Endothelial cell of umbilical vein (primary cell): ENCODE measurements at regions of chr13 and their contacts with region 1.

Region 1: DNA sequence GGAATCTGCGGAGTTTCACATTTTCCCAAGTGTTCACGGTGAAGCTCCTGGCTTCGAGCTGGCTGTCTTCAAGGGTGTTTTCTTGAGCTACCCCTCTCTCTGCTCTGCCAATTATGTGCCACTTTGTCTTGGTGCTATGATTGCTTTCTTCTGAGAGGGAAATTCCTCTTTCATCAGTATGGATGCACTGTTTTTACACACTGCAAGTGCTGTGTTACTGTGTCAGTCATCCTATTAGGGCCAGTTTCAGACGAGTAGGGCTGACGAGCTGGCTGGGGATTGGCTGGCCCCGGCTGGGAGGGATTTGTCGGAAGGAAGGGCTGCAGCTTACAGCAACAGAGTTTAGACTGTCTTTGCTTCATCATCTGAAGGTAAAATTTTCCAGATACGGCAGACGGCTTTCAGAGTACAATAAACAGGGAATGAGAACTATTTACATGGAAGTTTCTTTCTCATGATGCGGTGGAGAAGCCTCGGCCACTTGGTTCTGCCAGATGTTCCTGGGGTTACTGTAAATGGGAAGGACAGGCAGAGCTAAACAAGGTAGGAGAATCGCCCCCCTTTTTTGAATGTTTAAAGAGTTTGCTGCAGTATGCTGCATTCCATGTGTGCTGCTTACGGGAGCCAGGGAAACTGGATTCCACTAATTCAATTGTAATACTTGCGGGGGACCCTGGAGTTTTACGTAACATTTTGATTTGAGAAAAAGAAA is at the start of gene MBNL2:
- DNase-seq: peak; percentile 98
- H3K4me3 ChIP-seq: peak within 1 kb of the TSS; percentile 54 to 100 (median 98)
- H3K27ac ChIP-seq: peak within 1 kb of the TSS; percentile 89
- H3K4me1 ChIP-seq: peaks cover 32% of the 10 kb centered on the region
- H3K27me3 ChIP-seq: no peaks in the 10 kb centered on the region
- CTCF ChIP-seq: no peak
- POLR2A ChIP-seq: peak; percentile 70
- total RNA-seq, gene MBNL2: 75.6 and 76.5 TPM in 2 replicates

Region 2: DNA sequence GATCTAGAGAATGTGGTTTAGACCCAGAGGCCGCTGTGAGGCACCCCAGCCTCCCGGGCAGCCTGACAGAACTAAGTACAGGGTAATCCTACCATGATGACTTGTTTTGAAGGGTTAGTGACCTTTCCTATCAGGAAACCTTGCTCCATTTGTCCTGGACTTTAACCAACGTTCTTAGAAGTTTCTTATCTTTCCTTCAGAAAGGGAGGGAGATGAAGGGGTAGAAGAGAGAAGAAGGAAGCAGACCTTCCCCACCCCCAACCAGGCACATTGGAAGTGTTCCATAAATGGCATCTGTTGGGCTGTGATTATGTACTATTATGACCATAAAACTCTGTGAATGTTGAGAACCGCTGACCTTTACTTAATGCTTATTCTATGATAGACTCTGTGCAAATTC is 412.0 kb before region 1 on chr13:
- CTCF ChIA-PET with region 1: no interaction called
- POLR2A ChIA-PET with region 1: no interaction called
- dilution Hi-C with region 1: no loop called
- intact Hi-C with region 1: no loop called
- DNase-seq: no peak
- H3K4me3 ChIP-seq: no peak overlapping the region
- H3K27ac ChIP-seq: no peak overlapping the region
- H3K4me1 ChIP-seq: no peaks in the 10 kb centered on the region
- H3K27me3 ChIP-seq: no peaks in the 10 kb centered on the region
- CTCF ChIP-seq: no peak
- POLR2A ChIP-seq: no peak

Region 3: GRCh38 chr13:97235549-97236231 is 13.5 kb after region 1 on chr13:
- CTCF ChIA-PET with region 1: interaction called, 44 read pairs
- POLR2A ChIA-PET with region 1: interaction called, 9 read pairs
- dilution Hi-C with region 1: no loop called
- intact Hi-C with region 1: loop called (anchors 1 kb)
- DNase-seq: peak; percentile 64
- H3K4me3 ChIP-seq: peak overlapping the region in 2 of 3 experiments; percentile 13 to 33
- H3K27ac ChIP-seq: peak overlapping the region; percentile 60
- H3K4me1 ChIP-seq: peaks cover 70% of the 10 kb centered on the region
- H3K27me3 ChIP-seq: no peaks in the 10 kb centered on the region
- CTCF ChIP-seq: no peak
- POLR2A ChIP-seq: no peak

Region 4: DNA sequence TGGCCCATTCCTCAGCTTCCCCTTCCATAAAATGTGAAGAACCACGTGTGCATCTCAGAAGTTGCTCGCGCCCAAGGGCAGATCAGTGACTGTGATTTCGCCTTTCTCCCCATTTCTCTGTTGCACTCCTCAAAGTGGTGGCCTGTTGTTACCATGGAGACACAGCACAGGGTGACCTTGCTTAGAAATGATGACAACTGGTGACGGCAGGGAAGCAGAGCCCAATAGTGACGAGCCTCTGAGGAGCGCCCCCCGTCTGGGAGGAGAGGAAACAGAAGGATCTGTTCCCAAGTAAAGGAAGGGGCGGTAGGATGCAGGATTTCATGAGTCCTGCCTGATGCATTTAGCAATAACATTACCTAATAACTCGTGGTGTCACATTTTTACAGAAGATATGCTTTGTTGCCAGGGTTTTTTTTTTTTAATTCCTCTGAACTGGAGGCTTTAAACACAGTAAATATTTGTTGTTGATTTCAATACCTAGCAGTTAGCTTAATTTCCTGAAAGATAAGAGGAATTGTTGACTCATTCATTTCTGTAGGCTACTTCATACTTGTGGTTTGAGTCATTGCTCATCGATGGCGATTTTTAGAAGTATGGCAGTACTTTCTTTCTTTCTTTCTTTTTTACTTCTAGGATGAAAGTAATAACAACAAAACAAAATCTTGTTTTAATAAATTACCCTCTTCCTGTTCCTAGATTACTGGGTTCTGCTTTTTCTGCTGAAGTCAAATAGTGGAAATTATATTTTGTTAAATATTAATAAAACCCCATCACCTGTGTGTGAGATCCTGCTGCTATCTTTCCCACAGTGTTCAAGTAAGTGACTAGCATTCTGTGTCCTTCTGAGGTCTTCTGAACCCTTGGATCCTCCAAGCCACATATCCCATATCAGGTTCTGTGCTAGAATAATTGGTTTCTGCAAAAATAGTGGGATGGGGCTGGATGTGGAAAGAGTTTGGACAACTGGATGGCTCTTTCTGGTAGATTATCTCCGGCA is 36.0 kb after region 1 on chr13:
- CTCF ChIA-PET with region 1: interaction called, 29 read pairs
- POLR2A ChIA-PET with region 1: interaction called, 6 read pairs
- dilution Hi-C with region 1: no loop called
- intact Hi-C with region 1: loop called (anchors 1 kb)
- DNase-seq: peak; percentile 98
- H3K4me3 ChIP-seq: no peak overlapping the region
- H3K27ac ChIP-seq: peak overlapping the region; percentile 98
- H3K4me1 ChIP-seq: peaks cover 76% of the 10 kb centered on the region
- H3K27me3 ChIP-seq: no peaks in the 10 kb centered on the region
- CTCF ChIP-seq: peak in 1 of 2 donors; percentile 21
- POLR2A ChIP-seq: peak; percentile 46

Region 5: GRCh38 chr13:97295283-97296182 is 73.4 kb after region 1 on chr13:
- CTCF ChIA-PET with region 1: interaction called, 8 read pairs
- POLR2A ChIA-PET with region 1: interaction called, 7 read pairs
- dilution Hi-C with region 1: no loop called
- intact Hi-C with region 1: loop called (anchors 1 kb)
- DNase-seq: peak; percentile 85
- H3K4me3 ChIP-seq: peak overlapping the region in 1 of 3 experiments; percentile 29
- H3K27ac ChIP-seq: peak overlapping the region; percentile 98
- H3K4me1 ChIP-seq: peaks cover 37% of the 10 kb centered on the region
- H3K27me3 ChIP-seq: no peaks in the 10 kb centered on the region
- CTCF ChIP-seq: no peak
- POLR2A ChIP-seq: peak; percentile 24

Region 6: GRCh38 chr13:97344265-97345175 is 122.4 kb after region 1 on chr13:
- CTCF ChIA-PET with region 1: interaction called, 56 read pairs
- POLR2A ChIA-PET with region 1: interaction called, 4 read pairs
- dilution Hi-C with region 1: no loop called
- intact Hi-C with region 1: loop called (anchors 1 kb)
- DNase-seq: peak; percentile 78
- H3K4me3 ChIP-seq: no peak overlapping the region
- H3K27ac ChIP-seq: peak overlapping the region; percentile 32
- H3K4me1 ChIP-seq: peaks cover 5% of the 10 kb centered on the region
- H3K27me3 ChIP-seq: no peaks in the 10 kb centered on the region
- CTCF ChIP-seq: peak; percentile 56 to 63
- POLR2A ChIP-seq: no peak

Region 7: DNA sequence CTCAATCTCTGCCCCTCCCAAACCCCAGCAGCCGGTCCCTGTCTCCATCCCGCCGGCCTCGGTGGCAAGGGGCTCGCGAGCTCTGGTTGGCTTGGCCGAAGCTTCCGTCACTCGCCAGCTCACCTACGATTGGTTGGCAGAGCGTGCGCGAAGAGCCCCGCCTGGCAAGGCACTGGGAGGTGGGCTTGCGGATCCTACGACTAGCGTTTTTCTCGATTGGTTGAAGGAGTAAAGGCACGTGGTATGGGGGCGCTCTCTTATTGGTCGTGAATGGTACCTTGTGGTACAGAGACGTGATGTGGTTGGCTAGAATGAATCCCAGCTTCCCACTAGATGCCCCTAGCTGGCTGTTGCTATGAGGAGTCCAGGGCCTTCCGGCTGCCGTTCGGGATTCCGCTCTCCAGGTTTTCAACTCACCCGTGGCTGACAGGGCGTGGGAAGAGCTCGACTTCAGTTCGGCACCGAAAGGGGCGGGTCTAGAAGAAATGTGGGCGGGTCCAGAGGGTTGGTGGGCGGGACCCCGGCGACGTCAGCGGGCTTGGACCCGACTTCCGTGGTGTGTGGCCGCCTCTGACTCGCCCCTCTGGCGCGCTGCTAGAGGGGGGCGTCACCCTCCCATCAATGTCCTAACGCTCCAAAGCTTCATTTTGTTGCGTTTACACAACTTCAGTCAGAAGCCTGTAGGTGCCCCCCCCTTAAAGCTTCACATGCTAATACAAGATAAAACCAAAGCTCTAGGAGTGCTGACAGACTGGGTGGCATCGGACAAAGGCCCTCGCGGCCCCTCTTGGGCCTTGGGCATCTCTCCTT is 211.0 kb after region 1 on chr13:
- CTCF ChIA-PET with region 1: no interaction called
- POLR2A ChIA-PET with region 1: no interaction called
- dilution Hi-C with region 1: no loop called
- intact Hi-C with region 1: loop called (anchors 2 kb)
- DNase-seq: peak; percentile 100
- H3K4me3 ChIP-seq: peak overlapping the region; percentile 70 to 87 (median 76)
- H3K27ac ChIP-seq: peak overlapping the region; percentile 95
- H3K4me1 ChIP-seq: peaks cover 17% of the 10 kb centered on the region
- H3K27me3 ChIP-seq: no peaks in the 10 kb centered on the region
- CTCF ChIP-seq: no peak
- POLR2A ChIP-seq: peak; percentile 90